ENCODE measurements at regions of chr17 and their contacts with region 1.

Region 1: DNA sequence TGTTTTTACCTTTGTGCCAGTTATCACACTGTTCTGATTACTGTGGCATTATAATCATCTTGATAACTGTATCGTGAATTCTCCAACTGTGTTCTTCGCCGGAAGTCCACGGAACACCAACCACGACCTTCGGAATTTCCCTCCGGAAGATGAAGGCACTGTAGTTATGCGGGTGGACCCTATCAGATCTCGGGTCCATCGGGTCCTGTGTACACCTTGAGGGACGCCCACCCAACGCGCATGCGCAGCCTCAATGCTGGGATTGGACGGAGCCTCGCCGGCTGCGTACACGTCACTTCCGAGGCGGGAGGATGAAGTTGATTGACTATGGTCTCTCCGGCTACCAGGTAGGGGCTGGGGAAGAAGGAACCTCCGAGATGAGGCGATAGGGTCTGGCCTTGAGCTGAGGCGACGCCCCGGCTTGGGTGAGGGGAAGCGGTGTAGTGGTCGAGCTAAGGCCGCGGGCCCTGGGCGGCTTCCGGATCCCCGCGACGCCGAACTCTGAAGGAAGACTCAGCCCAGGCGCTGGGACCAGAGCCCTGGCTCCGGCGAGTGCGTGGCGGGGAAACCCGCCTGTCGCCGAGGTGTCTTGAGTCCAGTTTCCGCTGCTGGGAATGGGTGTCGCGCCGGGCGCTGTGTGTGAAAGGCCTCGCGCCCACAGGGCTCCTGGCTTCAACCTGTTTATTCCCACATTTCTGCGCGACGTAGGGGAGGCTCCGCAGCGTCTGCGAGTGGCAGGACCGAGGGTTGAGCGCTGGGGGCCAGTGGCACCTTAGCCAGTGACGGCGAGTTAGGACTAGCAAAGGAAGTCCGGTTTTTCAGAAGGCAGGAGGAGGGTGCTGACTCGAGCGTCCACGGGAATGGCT is at the start of gene DHRS7B:
- DNase-seq: peak; percentile 26
- H3K4me3 ChIP-seq: peak within 1 kb of the TSS; percentile 98
- CTCF ChIP-seq: no peak

Region 2: DNA sequence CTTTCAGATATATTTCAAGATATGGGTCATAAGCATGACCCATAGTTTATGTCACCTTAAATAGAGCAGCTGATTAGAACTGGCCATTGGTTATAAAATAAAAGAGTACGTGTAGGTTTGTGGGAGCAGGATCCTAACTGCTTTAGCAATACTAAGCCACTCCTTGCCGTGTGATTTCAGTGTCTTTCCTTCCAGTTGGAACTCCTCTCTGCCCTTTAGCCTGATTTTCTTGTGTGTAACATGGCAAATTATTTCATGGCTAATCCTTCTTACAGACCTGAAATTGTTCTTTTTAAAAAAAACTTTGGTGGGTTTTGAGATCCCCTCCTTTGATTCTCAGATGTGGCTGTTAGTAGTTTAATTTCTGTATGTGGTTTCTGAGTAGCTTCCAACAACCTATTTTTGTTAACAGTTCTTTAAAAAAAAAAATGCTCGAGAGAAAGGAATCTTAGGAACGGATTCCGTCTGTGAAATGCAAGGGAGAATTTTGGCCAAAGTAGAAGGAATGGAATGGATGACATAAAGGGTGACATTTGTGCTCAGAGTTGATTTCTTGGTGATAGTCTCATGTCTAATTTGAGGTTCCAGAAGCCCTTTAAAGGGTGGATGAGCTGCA is 39.8 kb after region 1 on chr17:
- CTCF ChIA-PET with region 1: interaction called, 18 read pairs
- POLR2A ChIA-PET with region 1: no interaction called
- DNase-seq: peak; percentile 59
- H3K4me3 ChIP-seq: no peak overlapping the region
- CTCF ChIP-seq: no peak

Region 3: GRCh38 chr17:21214015-21214776 is 87.3 kb after region 1 on chr17 and contains the start of gene TMEM11:
- CTCF ChIA-PET with region 1: interaction called, 37 read pairs
- POLR2A ChIA-PET with region 1: interaction called, 3 read pairs
- DNase-seq: peak; percentile 70
- H3K4me3 ChIP-seq: peak within 1 kb of the TSS; percentile 97
- CTCF ChIP-seq: no peak

Region 4: DNA sequence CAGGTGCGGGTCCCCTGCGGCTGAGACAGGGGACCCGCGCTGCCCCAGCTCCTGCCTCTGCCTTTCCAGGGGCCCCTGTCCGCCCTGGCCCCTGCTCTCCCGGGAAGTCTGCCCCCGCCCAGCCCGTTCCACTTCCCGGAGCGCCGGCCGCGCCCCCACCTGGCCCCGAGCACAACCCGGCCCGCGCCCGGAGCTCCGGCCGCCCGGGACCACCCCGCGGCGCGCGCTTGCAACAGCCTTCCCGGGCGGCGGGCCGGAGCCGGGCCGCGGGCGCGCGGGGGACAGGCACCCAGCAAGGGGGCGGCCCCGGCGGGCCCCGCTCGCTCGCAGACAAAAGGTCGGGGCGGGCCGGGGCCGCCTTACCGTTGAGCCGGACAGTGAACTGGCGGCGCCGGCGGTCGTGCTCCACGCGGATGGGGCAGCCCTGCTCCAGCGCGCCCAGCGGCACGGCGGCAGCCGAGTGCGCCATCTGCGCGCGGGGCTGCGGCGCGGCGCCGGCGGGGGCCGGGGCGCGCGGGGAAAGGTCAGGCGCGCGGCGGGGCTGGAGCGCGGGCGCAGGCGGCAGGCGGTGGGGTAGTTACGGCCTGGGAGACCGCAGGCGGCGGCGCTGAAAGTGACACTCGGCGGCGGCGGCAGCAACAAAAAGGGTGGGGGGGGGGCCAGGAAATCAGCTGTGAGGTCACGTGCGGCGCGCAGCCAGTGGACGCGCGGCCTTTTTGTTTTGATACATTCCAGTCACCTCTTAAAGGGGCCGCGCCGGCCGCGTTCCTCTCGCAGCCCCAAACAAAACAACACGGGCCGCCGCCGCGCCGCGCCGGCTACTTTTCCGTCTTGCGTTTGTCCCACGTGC is 126.1 kb after region 1 on chr17 and contains the start of gene NATD1:
- CTCF ChIA-PET with region 1: interaction called, 26 read pairs
- POLR2A ChIA-PET with region 1: no interaction called
- DNase-seq: no peak
- H3K4me3 ChIP-seq: peak within 1 kb of the TSS; percentile 59
- CTCF ChIP-seq: no peak

Region 5: GRCh38 chr17:21275579-21276263 is 148.8 kb after region 1 on chr17:
- CTCF ChIA-PET with region 1: interaction called, 64 read pairs
- POLR2A ChIA-PET with region 1: no interaction called
- DNase-seq: no peak
- H3K4me3 ChIP-seq: peak overlapping the region; percentile 65
- CTCF ChIP-seq: no peak

Region 6: DNA sequence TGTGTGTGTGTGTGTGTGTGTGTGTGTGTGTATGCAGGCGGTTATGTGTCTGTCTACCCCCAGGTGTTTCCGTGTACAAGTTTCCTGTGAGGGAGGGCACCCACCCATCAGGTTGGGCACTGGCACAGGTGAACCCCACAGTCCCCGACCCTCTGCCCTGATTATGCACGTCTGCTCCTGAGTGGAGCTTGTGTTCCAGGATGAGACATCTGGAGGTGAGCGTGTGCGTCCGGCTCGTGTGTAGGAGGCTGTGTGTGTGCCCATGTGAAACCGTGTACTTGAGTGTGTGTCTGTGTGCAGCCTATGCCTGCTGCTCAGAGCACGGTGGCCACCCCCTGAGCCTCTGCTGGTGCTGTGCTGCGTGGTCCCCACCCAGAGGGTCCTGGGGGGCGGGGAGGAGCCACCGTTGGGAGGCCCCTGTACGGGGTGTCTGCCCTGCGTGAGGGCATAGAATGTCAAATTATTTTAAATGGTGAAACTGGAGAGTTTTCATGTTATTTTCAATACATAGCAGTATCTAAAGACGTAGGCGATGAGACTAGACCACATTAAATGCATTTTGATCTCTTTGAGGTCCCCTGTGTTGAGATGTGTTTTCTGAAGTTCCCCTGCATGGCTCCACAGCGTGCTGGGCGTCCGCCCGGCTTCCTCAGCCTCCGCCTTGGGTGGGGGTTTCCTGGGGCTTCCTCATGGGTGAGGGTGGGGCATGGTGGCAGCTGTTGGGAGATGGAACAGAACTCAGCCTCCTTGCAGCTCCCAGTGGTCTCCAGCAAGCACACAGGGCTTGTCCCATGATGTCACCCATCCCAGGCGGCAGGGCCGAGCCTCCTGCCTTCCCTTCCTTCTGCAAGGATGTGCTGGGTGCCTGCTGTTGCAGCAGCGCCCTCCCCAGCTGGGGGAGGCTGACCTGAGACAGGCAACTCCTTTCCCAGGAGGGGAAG is 292.7 kb after region 1 on chr17:
- CTCF ChIA-PET with region 1: no interaction called
- POLR2A ChIA-PET with region 1: no interaction called
- DNase-seq: no peak
- H3K4me3 ChIP-seq: no peak overlapping the region
- CTCF ChIP-seq: no peak

Region 7: DNA sequence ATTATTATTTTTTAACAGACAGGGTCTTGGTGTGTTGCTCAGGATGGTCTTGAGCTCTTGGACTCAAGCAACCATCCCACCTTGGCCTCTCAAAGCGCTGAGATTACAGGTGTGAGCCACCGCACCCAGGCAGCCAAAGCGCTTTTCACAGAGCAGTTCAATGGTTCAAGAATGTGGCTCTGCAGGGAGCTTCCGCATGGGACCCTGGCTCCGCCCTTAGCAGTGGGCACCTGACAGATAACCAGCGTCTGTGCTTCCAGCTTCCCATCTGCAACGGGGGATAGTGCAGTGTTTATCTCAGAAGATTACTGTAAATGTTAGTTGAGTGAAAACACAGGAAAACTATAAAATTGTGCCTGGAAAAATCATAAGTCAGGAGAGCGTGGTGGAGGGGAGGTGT is 348.7 kb after region 1 on chr17:
- CTCF ChIA-PET with region 1: no interaction called
- POLR2A ChIA-PET with region 1: no interaction called
- DNase-seq: no peak
- H3K4me3 ChIP-seq: no peak overlapping the region
- CTCF ChIP-seq: no peak

Measured in AG04449 (cell line).